IMR-90 (cell line): ENCODE measurements at regions of chr9 and their contacts with region 1.

Region 1: GRCh38 chr9:129161534-129161837 is 16.6 kb downstream of the IER5L start:
- DNase-seq: no peak
- ATAC-seq: no peak
- H3K4me3 ChIP-seq: no peak overlapping the region
- H3K27ac ChIP-seq: no peak overlapping the region
- H3K4me1 ChIP-seq: peaks cover 13% of the 10 kb centered on the region
- H3K27me3 ChIP-seq: no peaks in the 10 kb centered on the region
- CTCF ChIP-seq: no peak
- POLR2A ChIP-seq: no peak
- RAD21 ChIP-seq: no peak

Region 2: DNA sequence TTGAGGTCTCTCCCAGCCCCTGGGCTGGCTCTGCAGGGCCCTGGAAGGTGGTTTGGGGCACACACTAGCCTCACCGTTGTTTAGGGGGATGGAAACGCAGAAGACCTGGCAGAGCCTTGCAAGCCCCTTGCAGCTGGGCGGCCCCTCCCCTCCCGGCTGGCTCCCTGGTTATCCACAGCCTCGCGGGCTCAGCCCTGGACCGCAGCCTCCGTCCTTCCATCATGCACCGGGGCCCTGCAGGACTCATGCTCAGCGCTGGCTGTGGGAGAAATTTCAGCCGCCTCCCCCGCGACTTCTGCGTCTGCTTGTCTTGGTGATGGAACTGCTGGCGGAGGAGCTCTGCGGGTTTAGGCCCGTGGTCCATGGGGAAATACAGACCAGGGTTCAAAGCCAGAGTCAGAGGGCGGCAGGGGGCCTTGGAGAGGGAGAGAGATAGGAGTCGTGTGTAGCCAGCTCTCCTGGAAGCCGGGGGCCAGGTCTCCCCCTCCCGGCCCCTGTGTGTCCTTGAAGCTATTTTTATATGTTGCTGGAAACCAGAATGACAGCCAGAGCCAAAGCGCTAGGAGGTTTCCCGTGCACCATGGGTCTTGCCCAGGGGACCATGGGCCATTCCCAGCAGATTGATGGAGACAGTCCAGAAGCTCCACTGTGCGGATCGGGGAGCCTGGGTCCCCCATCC is 92.5 kb after region 1 on chr9:
- CTCF ChIA-PET with region 1: no interaction called
- POLR2A ChIA-PET with region 1: no interaction called
- dilution Hi-C with region 1: no loop called
- in situ Hi-C with region 1: no loop called
- intact Hi-C with region 1: no loop called
- DNase-seq: no peak
- ATAC-seq: no peak
- H3K4me3 ChIP-seq: no peak overlapping the region
- H3K27ac ChIP-seq: no peak overlapping the region
- H3K4me1 ChIP-seq: peaks cover 5% of the 10 kb centered on the region; the same call in 1 of the 2 replicates
- H3K27me3 ChIP-seq: peaks cover 2% of the 10 kb centered on the region
- CTCF ChIP-seq: no peak
- POLR2A ChIP-seq: no peak
- RAD21 ChIP-seq: no peak

Region 3: DNA sequence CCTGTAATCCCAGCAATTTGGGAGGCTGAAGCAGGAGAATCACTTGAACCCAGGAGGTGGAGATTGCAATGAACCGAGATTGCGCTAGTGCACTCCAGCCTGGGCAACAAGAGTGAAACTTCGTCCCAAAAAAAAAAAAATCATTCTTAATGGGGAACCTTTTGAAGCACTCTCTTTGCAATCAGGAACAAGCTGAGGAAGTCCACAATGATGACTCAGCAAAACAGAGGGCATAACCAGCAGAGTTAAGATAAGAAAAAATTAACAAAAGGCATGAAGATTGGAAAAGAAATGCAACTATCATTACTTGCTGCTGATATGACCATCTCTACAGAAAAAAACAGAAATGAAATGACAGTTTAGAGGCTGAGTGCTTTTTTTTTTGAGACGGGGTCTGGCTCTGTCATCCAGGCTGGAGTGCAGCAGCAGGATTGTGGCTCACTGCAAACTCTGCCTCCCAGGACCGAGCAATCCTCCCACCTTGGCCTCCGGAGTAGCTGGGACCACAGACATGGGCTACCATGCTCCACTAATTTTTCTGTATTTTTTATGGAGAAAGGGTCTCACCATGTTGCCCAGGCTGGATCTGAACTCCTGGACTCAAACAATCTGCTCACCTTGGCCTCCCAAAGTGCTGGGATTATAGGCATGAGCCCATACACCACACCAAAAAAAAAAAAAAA is 793.5 kb after region 1 on chr9:
- CTCF ChIA-PET with region 1: no interaction called
- POLR2A ChIA-PET with region 1: interaction called, 20 read pairs
- dilution Hi-C with region 1: no loop called
- in situ Hi-C with region 1: no loop called
- intact Hi-C with region 1: no loop called
- DNase-seq: peak; percentile 33
- ATAC-seq: peak; percentile 21
- H3K4me3 ChIP-seq: no peak overlapping the region
- H3K27ac ChIP-seq: peak overlapping the region; percentile 7; the same call in 1 of the 2 replicates
- H3K4me1 ChIP-seq: peaks cover 3% of the 10 kb centered on the region; the same call in 1 of the 2 replicates
- H3K27me3 ChIP-seq: no peaks in the 10 kb centered on the region
- CTCF ChIP-seq: no peak
- POLR2A ChIP-seq: no peak
- RAD21 ChIP-seq: no peak